ENCODE measurements at regions of chr17 and their contacts with region 1.

Region 1: DNA sequence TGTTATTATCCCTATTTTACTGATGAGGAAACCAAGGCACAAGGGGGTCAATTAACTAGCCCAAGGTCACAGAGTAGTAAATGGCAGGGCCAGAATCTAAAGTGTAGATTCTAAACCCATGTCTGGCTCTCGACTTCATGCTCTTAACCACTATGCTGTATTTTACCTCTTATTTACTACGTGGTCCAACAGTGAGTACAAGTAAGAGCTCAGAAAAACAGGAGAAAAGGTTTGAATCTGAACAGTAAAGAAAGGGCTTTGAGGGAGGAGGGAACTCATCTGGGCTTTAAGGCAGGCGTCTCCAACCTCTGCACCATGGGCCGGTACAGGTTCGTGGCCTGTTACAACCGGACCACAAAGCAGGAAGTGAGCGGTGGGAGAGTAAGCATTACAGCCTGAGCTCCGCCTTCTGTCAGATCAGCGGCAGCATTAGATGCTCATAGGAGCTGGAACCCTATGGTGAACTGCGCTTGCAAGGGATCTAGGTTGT is 62.9 kb downstream of the SMURF2 start:
- DNase-seq: peak; percentile 77
- H3K4me3 Mint-ChIP-seq: peak overlapping the region; percentile 77
- H3K27ac Mint-ChIP-seq: peak overlapping the region; percentile 88
- H3K4me1 Mint-ChIP-seq: peaks cover 31% of the 10 kb centered on the region
- H3K27me3 Mint-ChIP-seq: no peaks in the 10 kb centered on the region

Region 2: DNA sequence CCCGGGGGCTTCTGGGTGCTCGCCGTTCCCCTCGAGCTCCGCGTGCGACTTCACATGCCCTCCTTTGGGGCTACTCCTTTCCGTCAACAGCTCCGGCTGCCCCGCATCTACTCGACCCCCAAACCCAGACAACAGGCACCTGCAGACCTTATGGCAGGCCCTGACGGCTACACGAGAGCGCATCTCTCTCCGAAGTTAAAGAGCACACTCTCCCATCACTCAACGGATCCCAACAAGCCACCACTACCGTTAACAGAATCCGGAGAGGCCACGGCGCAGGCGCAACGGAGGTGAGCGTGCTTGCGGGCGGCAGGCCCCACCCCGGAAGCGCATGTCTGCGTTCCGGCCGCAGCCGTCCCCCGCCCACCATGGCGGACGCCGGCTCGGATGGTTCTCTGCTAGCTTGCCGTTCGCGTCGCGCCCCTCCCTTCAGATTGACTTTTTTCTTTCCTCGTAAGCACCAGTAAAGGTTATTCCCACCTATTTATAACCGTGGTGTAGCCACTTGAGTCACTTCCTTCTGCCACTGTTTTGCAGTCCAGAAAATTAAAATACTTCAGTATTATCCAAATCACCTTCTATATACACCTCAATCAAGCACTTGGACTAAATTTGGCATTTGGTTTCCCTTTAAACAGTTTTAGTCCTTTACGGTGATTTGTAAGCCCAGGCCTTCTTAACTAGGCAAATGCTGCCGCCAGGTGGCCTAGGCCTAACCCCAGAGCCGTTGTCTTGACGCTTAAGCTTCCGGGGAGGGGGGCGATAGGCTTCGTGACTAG is 102.3 kb before region 1 on chr17 and contains the start of gene POLG2:
- CTCF ChIA-PET with region 1: no interaction called
- intact Hi-C with region 1: loop called (anchors 1 kb)
- DNase-seq: peak; percentile 96
- H3K4me3 Mint-ChIP-seq: peak within 1 kb of the TSS; percentile 100
- H3K27ac Mint-ChIP-seq: peak within 1 kb of the TSS; percentile 97
- H3K4me1 Mint-ChIP-seq: peaks cover 74% of the 10 kb centered on the region
- H3K27me3 Mint-ChIP-seq: no peaks in the 10 kb centered on the region
- total RNA-seq, gene POLG2: 23.4 to 26.9 TPM

Region 3: GRCh38 chr17:64547319-64547718 is 51.9 kb before region 1 on chr17:
- CTCF ChIA-PET with region 1: no interaction called
- intact Hi-C with region 1: no loop called
- DNase-seq: no peak
- H3K4me3 Mint-ChIP-seq: no peak overlapping the region
- H3K27ac Mint-ChIP-seq: no peak overlapping the region
- H3K4me1 Mint-ChIP-seq: no peaks in the 10 kb centered on the region
- H3K27me3 Mint-ChIP-seq: no peaks in the 10 kb centered on the region

Region 4: DNA sequence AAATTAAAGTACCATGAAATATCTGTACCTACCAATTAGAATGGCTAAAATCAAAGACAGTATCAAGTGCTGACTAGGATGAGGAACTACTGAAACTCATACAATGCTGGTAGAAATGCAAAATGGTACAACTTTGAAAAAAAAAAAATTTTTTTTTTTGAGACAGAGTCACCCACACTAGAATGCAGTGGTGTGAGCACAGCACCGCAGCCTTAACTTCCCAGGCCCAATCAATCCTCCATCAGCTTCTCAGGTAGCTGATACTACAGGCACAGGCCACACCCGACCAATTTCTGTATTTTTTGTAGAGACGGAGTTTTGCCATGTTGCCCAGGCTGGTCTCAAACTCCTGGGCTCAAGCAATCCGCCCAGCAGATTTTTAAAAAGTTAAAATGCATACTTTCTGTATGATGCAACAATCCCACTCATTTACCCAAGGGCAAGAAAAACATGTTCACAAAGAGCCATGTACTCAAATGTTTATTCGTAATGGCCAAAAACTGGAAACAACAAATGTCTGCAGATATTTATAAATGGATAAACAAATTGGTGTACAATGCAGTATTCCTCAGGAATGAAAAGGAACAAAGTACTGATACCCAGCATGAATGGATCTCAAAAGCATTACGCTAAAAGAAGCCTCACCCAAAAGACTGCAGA is 54.2 kb after region 1 on chr17:
- CTCF ChIA-PET with region 1: interaction called, 6 read pairs
- intact Hi-C with region 1: loop called (anchors 1 kb)
- DNase-seq: no peak
- H3K4me3 Mint-ChIP-seq: no peak overlapping the region
- H3K27ac Mint-ChIP-seq: peak overlapping the region; percentile 50
- H3K4me1 Mint-ChIP-seq: peaks cover 45% of the 10 kb centered on the region
- H3K27me3 Mint-ChIP-seq: no peaks in the 10 kb centered on the region

Measured in activated naive CD4-positive, alpha-beta T cell treated with anti-CD3 and anti-CD28 coated beads for 36 hours (primary cell).